RWPE1 (cell line): ENCODE measurements at regions of chr4 and their contacts with region 1.

Region 1: DNA sequence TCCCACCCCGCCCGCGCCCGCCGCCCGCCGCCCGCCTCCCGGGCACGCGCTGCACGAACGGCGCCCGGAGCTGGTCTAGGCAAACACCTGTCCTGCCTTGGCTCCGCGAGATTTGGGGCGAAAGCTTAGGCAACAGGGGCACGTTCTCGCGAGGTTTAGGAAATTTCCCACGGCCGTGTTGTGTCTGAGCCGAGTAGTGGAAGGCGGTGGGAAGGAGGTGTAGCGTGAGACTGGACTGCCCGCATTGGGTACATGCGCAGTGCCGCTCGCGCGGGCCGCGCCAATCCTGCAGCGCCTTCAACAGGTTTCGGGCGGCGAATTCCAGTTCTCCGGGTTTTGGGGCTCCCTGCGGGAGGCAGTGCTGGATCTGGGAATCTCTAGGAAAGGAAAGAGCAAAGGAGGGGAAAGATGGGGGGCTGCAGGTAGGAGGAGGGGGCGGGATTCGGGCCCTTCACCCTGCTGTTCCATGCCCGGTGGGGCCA is 1.3 kb upstream of the RBPJ start:
- DNase-seq: peak; percentile 95
- H3K27ac ChIP-seq: peak overlapping the region; percentile 97
- CTCF ChIP-seq: peak; percentile 37; the same call in 1 of the 2 replicates

Region 2: DNA sequence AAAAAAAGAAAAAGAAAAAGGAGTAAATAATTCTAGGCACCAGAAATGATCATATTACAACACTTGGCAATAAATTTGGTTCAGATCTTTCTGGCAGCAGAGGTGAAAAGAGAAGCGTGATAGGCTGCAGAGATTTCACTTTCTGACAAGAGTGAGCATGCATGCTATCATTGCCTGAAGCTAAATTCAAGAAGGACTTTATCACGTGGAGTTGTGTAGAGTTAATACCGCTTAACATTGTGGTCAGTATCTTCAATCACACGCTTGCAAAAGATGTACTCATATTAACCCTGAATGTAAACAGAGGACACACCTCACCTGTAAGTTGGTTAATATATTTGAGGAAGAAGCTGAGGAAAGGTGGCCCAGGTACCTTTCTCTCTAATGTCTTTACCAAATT is 30.1 kb before region 1 on chr4:
- CTCF ChIA-PET with region 1: interaction called, 10 read pairs
- POLR2A ChIA-PET with region 1: interaction called, 4 read pairs
- DNase-seq: peak; percentile 67
- H3K27ac ChIP-seq: peak overlapping the region; percentile 53; the same call in 1 of the 2 replicates
- CTCF ChIP-seq: no peak

Region 3: GRCh38 chr4:26302031-26302899 is 17.2 kb before region 1 on chr4:
- CTCF ChIA-PET with region 1: no interaction called
- POLR2A ChIA-PET with region 1: interaction called, 13 read pairs
- DNase-seq: no peak
- H3K27ac ChIP-seq: no peak overlapping the region
- CTCF ChIP-seq: no peak

Region 4: GRCh38 chr4:26842911-26843310 is 523.4 kb after region 1 on chr4:
- CTCF ChIA-PET with region 1: no interaction called
- POLR2A ChIA-PET with region 1: no interaction called
- DNase-seq: no peak
- H3K27ac ChIP-seq: no peak overlapping the region
- CTCF ChIP-seq: no peak